Activated naive CD4-positive, alpha-beta T cell treated with anti-CD3 and anti-CD28 coated beads for 36 hours (primary cell): ENCODE measurements at regions of chr4 and their contacts with region 1.

Region 1: GRCh38 chr4:10157478-10158332 is 41.1 kb upstream of the WDR1 start:
- DNase-seq: peak; percentile 65
- H3K4me3 Mint-ChIP-seq: no peak overlapping the region
- H3K27ac Mint-ChIP-seq: no peak overlapping the region
- H3K4me1 Mint-ChIP-seq: peaks cover 48% of the 10 kb centered on the region
- H3K27me3 Mint-ChIP-seq: no peaks in the 10 kb centered on the region

Region 2: DNA sequence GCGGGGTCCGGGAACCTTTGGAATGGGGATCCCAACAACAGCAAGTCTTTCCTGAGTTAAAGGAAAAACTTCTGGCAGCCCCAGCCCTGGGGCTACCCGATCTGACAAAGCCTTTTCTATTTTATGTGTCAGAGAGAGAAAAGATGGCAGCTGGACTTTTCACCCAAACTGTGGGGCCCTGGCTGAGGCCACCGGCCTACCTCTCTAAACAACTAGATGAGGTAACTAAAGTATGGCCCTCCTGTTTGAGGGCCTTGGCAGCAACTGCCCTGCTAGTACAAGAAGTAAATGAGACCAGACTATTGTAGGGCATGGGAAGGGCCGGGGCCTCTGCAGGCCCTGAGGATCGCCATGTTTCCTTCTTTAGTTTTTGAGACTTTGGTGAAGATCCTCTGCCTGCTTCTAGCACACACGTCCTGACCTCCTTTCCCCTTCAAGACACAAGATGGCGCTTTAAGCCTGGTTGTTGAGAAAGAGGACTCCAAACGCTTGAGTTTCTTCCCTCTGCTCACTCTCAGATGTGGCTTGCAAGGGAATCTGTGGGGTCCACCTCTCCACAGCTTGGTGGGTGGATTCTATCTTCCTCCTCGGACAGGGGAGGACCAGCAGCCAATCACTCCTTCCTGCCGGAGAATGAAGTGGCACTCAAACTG is 394.8 kb before region 1 on chr4:
- CTCF ChIA-PET with region 1: no interaction called
- intact Hi-C with region 1: loop called (anchors 10 kb)
- DNase-seq: peak; percentile 63
- H3K4me3 Mint-ChIP-seq: no peak overlapping the region
- H3K27ac Mint-ChIP-seq: no peak overlapping the region
- H3K4me1 Mint-ChIP-seq: no peaks in the 10 kb centered on the region
- H3K27me3 Mint-ChIP-seq: peaks cover 16% of the 10 kb centered on the region

Region 3: GRCh38 chr4:10116580-10117358 is 40.9 kb before region 1 on chr4 and contains the start of gene WDR1:
- CTCF ChIA-PET with region 1: interaction called, 7 read pairs
- intact Hi-C with region 1: loop called (anchors 1 kb)
- DNase-seq: peak; percentile 90
- H3K4me3 Mint-ChIP-seq: peak within 1 kb of the TSS; percentile 93
- H3K27ac Mint-ChIP-seq: peak within 1 kb of the TSS; percentile 100
- H3K4me1 Mint-ChIP-seq: peaks cover 80% of the 10 kb centered on the region
- H3K27me3 Mint-ChIP-seq: no peaks in the 10 kb centered on the region
- total RNA-seq, gene WDR1: 271 to 295 TPM

Region 4: DNA sequence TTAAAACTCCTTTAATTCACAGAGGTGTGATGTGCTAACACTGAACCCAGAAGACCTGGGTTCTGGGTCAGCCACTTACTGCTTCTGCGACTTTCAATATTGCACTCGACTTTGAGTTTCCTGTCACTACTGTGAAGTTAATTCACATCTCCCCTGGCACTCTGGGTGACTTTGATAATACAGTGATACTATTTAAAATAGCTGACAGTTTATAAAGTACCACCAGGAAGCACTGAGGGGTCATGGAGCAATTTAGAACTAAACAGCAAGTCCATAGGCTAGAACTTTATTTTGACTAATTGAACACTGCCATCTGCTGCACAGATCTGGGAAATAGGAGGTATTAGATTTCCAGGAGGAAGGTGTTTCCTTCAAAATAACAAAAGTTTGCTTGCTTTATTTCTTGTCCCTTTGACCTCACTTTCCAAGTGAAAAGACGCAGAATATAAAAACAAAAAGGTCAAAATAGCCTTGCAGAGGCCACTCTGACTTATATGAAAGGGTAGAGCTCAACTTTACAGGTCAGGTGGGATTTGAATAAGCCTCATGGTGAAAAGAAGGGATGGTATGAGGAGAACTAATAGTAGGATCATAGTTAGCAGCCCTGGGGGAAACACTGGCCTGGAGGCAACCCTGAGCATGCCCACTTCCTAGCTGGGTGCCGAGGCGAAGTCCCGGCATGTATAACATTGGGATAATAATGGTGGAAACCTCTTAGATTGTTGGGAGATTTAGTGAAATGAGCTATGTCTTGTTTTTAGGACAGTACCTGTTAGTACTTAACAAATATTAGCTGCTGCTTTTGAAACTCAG is 246.1 kb after region 1 on chr4:
- CTCF ChIA-PET with region 1: interaction called, 44 read pairs
- intact Hi-C with region 1: loop called (anchors 1 kb)
- DNase-seq: peak; percentile 38
- H3K4me3 Mint-ChIP-seq: no peak overlapping the region
- H3K27ac Mint-ChIP-seq: no peak overlapping the region
- H3K4me1 Mint-ChIP-seq: no peaks in the 10 kb centered on the region
- H3K27me3 Mint-ChIP-seq: no peaks in the 10 kb centered on the region

Region 5: GRCh38 chr4:10526429-10527222 is 368.9 kb after region 1 on chr4:
- CTCF ChIA-PET with region 1: interaction called, 18 read pairs
- intact Hi-C with region 1: no loop called
- DNase-seq: peak; percentile 7
- H3K4me3 Mint-ChIP-seq: no peak overlapping the region
- H3K27ac Mint-ChIP-seq: no peak overlapping the region
- H3K4me1 Mint-ChIP-seq: no peaks in the 10 kb centered on the region
- H3K27me3 Mint-ChIP-seq: peaks cover 1% of the 10 kb centered on the region

Region 6: GRCh38 chr4:10554694-10555093 is 397.0 kb after region 1 on chr4:
- CTCF ChIA-PET with region 1: interaction called, 45 read pairs
- intact Hi-C with region 1: loop called (anchors 1 kb)
- DNase-seq: peak; percentile 71
- H3K4me3 Mint-ChIP-seq: no peak overlapping the region
- H3K27ac Mint-ChIP-seq: no peak overlapping the region
- H3K4me1 Mint-ChIP-seq: peaks cover 3% of the 10 kb centered on the region
- H3K27me3 Mint-ChIP-seq: peaks cover 11% of the 10 kb centered on the region

Region 7: DNA sequence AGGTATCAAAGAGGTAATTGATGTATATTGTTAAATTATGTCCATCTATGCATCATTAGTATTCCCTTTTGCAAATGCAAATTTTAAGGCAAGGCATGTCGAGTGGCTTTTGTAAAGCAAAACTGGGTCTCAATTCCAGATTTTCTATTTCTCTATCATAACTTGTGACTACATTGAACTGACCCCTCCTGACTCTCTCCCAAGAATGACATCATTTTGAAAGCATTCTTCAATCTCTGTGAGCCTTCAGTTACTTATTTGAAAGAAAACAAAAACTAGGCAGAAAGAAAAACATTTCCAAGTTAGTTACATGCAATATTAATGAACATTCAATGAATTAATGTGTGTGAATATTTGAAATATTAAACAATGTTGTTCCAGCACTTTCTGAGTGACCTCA is 841.1 kb after region 1 on chr4:
- CTCF ChIA-PET with region 1: no interaction called
- intact Hi-C with region 1: no loop called
- DNase-seq: no peak
- H3K4me3 Mint-ChIP-seq: no peak overlapping the region
- H3K27ac Mint-ChIP-seq: no peak overlapping the region
- H3K4me1 Mint-ChIP-seq: no peaks in the 10 kb centered on the region
- H3K27me3 Mint-ChIP-seq: peaks cover 4% of the 10 kb centered on the region